ENCODE measurements at regions of chr4 and their contacts with region 1.

Region 1: DNA sequence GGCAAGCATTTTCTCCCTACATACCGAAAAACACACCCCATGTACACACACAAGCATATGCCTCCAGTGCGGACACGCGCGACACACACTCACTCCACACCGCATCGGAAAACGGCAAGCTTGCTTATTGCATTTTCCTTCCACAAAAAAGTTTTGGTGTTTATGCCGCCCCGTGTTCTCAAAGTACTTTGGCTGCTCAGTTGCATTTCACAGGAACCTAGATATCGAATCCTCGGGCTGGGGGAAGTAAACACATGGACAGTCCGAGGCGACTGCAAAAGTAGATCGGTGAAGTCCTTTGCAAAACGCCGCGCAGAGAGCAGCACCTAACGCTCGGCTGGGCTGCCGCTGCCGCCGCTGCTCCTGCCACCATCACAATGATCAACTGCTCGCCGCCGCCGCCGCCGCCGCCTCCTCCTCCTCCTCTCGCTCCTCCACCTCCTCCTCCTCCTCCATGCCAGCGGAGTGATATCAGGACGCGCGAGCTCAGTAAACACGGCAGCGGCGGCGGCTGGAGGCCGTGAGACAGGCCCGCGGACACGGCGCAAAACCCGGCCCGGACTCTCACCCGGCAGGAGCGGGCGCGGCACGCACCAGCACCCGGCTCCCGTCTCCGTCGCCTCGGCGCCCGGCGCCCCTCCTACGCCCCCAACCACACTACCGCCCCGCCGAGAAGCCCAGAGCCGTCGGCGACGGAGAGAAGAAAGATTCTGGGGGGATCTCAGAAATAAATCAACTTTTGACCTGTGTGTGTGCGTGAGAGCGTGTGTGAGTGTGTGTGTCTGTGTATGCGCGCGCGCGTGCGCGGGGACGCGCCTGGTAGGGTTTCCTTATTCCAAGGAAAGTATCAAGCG is at the start of gene MAML3:
- DNase-seq: peak; percentile 98
- H3K4me3 ChIP-seq: peak within 1 kb of the TSS; percentile 71 to 86 (median 76)
- H3K27ac ChIP-seq: peak within 1 kb of the TSS; percentile 96 to 99 (median 98)
- H3K4me1 ChIP-seq: peaks cover 0 to 36% (median 29%) of the 10 kb centered on the region in 4 donors
- H3K27me3 ChIP-seq: no peaks in the 10 kb centered on the region
- CTCF ChIP-seq: no peak
- EP300 ChIP-seq: no peak
- POLR2A ChIP-seq: peak; percentile 61 to 84
- total RNA-seq, gene MAML3: 5.0 to 16.3 (median 7.6) TPM

Region 2: DNA sequence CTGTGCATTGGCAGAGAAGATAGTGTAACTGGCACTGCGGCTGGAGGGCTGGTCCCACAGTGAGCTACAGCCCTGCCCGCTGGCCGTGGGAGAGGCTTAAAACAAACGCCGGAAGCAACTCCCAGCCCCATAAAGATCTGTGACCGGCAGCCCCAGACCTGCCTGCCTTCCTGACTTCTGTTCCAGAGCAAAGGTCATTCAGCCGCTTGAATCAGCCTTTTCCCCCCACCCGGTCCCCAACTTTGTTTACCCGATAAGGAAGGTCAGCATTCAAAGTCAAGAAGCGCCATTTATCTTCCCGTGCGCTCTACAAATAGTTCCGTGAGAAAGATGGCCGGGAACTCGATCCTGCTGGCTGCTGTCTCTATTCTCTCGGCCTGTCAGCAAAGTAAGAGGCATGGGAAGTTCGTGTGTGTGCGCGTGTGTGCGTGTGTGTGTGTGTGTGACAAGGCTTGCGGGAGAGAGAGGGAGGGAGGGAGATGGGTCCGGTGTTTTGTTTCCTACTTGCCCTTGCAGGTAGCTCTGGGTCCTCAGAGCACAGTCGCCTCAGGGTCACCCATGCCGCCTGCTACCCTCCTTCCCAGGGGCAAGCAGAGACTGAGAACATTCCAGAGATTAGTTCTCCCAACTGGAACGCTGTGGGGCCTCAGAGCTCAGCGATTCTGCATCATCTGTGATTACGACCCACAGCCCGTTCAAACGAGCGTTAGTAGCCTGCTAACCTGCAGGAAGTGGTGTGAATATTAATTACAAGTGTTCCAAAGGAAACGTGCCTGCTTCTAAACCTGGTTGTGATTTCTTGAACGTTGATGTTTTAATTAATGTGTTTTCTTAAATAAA is 488.0 kb before region 1 on chr4 and contains the start of gene MGST2:
- intact Hi-C with region 1: loop called (anchors 10 kb)
- DNase-seq: peak; percentile 82
- H3K4me3 ChIP-seq: peak within 1 kb of the TSS; percentile 40 to 59 (median 54)
- H3K27ac ChIP-seq: peak within 1 kb of the TSS; percentile 85 to 92 (median 89)
- H3K4me1 ChIP-seq: peaks cover 0 to 29% (median 9%) of the 10 kb centered on the region in 4 donors
- H3K27me3 ChIP-seq: no peaks in the 10 kb centered on the region
- CTCF ChIP-seq: no peak
- EP300 ChIP-seq: no peak
- POLR2A ChIP-seq: peak in 1 of 2 donors; percentile 50
- total RNA-seq, gene MGST2: 30.8 to 48.2 (median 42.3) TPM

Region 3: DNA sequence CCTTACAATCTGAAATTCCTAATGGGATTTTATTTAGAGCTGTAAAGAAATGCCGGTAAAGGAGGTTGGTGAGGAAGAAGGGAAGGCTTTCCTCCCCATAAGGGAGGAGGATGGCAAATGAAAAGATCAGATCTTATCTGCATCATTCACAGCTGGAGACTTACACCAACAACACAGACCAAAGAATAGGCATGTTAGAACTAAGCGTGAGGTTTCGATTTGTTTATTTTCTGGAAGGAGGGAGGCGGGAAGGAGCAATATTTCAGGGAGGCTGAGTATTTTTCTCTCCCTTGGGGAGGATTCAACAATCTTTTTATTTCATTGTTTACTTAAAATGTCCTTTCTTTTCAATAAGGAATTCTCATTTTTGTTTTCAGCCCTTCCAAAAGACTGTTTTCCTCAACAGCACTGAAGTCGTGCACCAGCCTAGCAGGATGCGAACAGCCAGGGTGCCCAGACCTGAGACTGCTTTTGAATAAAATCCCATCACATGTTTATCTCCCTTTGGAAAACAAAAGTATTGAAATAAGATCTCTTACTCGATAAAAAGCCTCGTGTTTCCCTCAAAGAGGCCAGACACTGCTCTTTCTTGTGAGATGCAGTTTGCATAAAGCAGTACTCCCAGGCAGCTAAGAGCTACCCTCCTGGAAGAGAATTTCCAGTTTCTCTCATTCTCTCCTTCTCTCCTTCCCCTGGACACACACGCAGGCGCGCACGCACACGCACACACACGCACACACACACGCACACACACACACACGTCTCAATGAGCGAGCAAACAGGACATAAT is 252.2 kb before region 1 on chr4:
- intact Hi-C with region 1: loop called (anchors 5 kb)
- DNase-seq: no peak
- H3K4me3 ChIP-seq: peak overlapping the region; percentile 22 to 49 (median 44)
- H3K27ac ChIP-seq: peak overlapping the region; percentile 42 to 68 (median 60)
- H3K4me1 ChIP-seq: peaks cover 0 to 18% (median 3%) of the 10 kb centered on the region in 4 donors
- H3K27me3 ChIP-seq: no peaks in the 10 kb centered on the region
- CTCF ChIP-seq: no peak
- EP300 ChIP-seq: no peak
- POLR2A ChIP-seq: no peak

Region 4: DNA sequence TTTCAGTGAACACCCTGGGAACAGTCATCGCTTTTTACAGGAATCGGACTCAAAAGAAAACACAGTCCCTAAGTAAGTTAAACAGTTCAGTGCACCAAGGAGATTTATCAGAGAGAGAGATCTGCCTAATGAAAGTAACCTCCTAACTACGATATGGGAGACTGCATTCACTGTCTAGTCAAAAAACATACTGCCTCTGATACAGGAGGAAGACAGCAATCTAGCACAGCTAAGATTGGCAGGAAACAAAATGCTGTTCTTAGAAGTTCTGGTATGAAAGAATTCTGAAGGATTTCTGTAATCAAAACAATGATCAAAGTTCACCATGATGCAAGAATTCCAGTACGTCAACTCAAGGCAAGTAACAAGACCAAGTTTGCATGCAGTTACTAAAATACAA is 92.8 kb before region 1 on chr4:
- intact Hi-C with region 1: loop called (anchors 5 kb)
- DNase-seq: no peak
- H3K4me3 ChIP-seq: no peak overlapping the region
- H3K27ac ChIP-seq: peak overlapping the region in 3 of 4 donors; percentile 3 to 20 (median 19)
- H3K4me1 ChIP-seq: peaks cover 0 to 29% (median 23%) of the 10 kb centered on the region in 4 donors
- H3K27me3 ChIP-seq: no peaks in the 10 kb centered on the region
- CTCF ChIP-seq: no peak
- EP300 ChIP-seq: no peak
- POLR2A ChIP-seq: no peak

Region 5: DNA sequence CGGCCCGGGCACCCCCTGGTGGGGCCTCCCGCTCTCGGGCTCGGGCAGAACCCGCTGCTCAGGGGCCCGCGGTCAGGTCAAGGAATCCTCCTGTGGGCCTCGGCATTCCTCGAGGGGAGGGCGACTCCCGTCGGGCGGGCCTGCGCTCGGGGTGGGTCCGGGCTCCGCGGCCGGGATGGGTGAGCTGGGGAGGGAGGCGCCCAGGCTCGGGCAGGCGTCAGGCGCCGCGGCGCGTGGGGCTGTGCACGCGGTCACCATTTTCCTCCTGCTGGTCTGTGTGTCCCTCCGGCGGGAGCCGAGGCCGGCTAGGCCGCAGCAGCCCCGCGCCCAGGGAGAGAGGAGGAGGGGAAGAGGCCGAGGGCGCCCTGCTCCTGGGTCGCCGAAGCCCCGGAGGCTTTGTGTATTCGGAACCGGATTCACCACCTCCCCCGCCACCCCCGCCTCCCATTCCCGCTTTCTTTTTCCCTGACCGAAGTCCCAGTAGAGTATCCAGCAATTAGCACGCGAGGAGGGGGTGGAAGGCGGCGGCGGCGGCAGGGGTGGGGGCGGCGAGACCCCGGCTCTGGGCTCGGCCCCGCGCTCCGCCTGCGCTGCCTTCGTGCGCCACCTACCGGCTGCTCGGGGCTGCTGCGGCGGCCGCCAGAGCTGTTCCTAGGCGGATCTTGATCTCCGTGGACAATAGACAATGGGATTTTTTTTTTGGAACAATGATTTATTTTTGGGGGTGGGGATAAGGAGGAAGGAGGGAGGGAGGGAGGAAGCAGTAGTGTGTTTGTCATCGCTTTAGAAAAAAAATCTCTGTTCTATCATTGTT is 99.0 kb after region 1 on chr4:
- intact Hi-C with region 1: loop called (anchors 1 kb)
- DNase-seq: peak; percentile 85
- H3K4me3 ChIP-seq: peak overlapping the region; percentile 38 to 66 (median 64)
- H3K27ac ChIP-seq: peak overlapping the region; percentile 88 to 93 (median 92)
- H3K4me1 ChIP-seq: peaks cover 0 to 50% (median 46%) of the 10 kb centered on the region in 4 donors
- H3K27me3 ChIP-seq: no peaks in the 10 kb centered on the region
- CTCF ChIP-seq: peak; percentile 51 to 98 (median 68)
- EP300 ChIP-seq: no peak
- POLR2A ChIP-seq: no peak

Measured in sigmoid colon (tissue), 7 donors.